ENCODE measurements at regions of chr1 and their contacts with region 1.

Region 1: DNA sequence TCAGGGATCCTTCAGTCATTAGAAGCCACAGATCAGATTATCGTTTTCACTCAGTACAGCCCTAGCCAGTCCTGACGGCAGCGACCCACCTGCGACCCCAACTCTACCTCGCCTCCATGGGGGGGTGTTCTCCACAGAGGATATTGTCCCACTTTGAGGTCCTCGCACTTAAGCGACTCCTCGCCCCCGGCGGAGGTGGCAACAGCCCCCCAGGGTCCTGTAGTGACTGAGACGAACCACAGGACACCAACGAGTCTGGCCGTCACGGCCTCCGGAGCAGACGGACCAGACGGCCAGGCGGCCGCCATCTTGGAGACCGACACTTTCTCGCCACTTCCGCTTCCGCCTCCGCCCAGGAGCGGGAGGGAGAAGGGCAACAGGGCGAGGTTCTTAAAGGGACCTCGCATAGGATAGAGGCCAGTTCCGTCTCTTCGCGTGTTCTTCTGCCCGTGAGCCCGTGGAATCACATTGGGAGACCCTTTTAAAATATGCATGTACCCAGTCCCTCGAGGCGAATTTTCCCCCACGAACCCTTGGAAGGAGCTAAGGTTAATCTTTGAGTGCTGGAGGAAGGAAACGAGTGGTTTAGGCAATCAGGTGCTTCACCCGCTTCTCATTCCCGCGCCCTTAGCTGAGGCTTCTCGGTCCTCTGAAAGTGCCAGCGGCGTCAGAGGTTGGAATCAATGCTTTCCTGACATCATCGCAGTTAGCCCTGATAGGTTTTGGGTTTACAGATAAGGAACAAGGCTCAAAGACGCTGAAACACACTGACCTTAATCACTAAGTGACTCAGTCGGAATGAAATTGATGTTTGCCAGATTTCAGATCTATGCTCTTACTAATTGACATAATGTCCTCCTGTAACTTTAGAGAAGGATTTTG is at the start of gene TM2D1:
- DNase-seq: peak; percentile 88 to 94 (median 93)
- ATAC-seq: peak; percentile 97 to 99 (median 99)
- H3K4me3 ChIP-seq: peak within 1 kb of the TSS; percentile 65 to 99 (median 92)
- H3K27ac ChIP-seq: peak within 1 kb of the TSS; percentile 72 to 97 (median 92)
- H3K4me1 ChIP-seq: peaks cover 0 to 28% (median 15%) of the 10 kb centered on the region in 12 donors
- H3K27me3 ChIP-seq: no peaks in the 10 kb centered on the region
- CTCF ChIP-seq: no peak
- POLR2A ChIP-seq: peak; percentile 23 to 67
- total RNA-seq, gene TM2D1: 28.5 to 44.0 (median 34.4) TPM

Region 2: DNA sequence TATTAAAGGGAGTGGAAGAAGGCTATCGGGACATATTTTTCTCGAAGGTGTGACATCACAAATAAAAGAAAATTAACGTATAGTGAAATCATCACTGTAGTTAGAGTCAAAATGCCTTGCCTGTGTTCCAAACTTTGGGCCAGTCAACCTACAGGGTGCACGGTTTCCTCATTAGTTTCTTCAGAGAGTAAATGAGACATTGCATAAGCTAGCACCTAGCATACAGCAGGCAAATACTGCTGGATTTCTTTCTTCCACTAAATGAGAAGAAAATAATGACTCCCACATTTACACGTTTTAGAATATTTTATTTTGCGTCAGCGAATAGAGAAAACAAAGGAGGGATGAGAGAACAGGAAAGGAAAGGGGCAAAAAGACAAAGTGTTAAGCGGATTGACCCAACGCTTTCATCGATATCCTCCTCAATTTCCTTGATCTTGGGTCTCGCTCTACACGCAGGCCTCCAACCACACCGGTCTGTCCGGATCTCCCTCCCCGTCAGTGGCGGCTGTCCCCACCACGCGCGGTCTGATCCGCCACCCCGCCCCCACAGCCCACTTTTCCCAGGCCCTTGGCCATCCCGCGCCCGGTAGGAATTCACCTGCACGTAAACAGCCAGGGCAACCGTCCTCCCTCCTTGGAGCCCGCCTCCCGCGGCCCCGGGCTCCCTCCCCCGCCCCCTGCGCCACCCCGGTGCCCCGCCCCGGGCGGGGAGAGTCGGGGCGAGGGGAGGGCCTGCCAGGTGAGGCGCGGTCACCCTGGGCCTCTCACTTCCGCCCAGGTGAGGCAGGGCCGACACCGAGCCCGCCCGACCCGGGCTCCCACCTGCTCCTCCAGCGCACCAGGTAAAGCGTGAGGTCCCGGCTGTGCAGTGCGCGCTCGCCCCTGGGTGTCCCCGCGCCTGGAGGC is 16.9 kb after region 1 on chr1 and contains the start of gene PATJ:
- intact Hi-C with region 1: loop called in 2 of 10 experiments (anchors 2 kb)
- DNase-seq: peak; percentile 57 to 72 (median 64)
- ATAC-seq: peak; percentile 40 to 85 (median 78)
- H3K4me3 ChIP-seq: peak within 1 kb of the TSS; percentile 56 to 100 (median 96)
- H3K27ac ChIP-seq: peak within 1 kb of the TSS; percentile 89 to 99 (median 96)
- H3K4me1 ChIP-seq: peaks cover 0 to 26% (median 10%) of the 10 kb centered on the region in 12 donors
- H3K27me3 ChIP-seq: no peaks in the 10 kb centered on the region
- CTCF ChIP-seq: no peak
- POLR2A ChIP-seq: no peak
- total RNA-seq, gene PATJ: 71.1 to 190 (median 114) TPM

Region 3: GRCh38 chr1:61842871-61843514 is 117.9 kb after region 1 on chr1:
- intact Hi-C with region 1: loop called in 1 of 10 experiments (anchors 10 kb)
- DNase-seq: no peak
- ATAC-seq: no peak
- H3K4me3 ChIP-seq: no peak overlapping the region
- H3K27ac ChIP-seq: no peak overlapping the region
- H3K4me1 ChIP-seq: peaks cover 0 to 14% (median 5%) of the 10 kb centered on the region in 12 donors
- H3K27me3 ChIP-seq: no peaks in the 10 kb centered on the region
- CTCF ChIP-seq: peak in 5 of 12 donors; percentile 12 to 41 (median 18)
- POLR2A ChIP-seq: no peak